Calu3 (cell line): ENCODE measurements at regions of chr3 and their contacts with region 1.

Region 1: GRCh38 chr3:192851821-192852424 is 65.7 kb downstream of the MB21D2 start:
- DNase-seq: peak; percentile 97
- H3K4me3 Mint-ChIP-seq: peak overlapping the region; percentile 35
- H3K27ac Mint-ChIP-seq: peak overlapping the region; percentile 56
- H3K4me1 Mint-ChIP-seq: peaks cover 38% of the 10 kb centered on the region
- H3K27me3 Mint-ChIP-seq: no peaks in the 10 kb centered on the region
- CTCF ChIP-seq: no peak

Region 2: GRCh38 chr3:192887047-192887446 is 35.1 kb after region 1 on chr3:
- CTCF ChIA-PET with region 1: interaction called, 6 read pairs
- intact Hi-C with region 1: loop called (anchors 2 kb)
- DNase-seq: peak; percentile 77
- H3K4me3 Mint-ChIP-seq: peak overlapping the region; percentile 60
- H3K27ac Mint-ChIP-seq: peak overlapping the region; percentile 88
- H3K4me1 Mint-ChIP-seq: peaks cover 93% of the 10 kb centered on the region
- H3K27me3 Mint-ChIP-seq: no peaks in the 10 kb centered on the region
- CTCF ChIP-seq: no peak